ENCODE measurements at regions of chr20 and their contacts with region 1.

Region 1: DNA sequence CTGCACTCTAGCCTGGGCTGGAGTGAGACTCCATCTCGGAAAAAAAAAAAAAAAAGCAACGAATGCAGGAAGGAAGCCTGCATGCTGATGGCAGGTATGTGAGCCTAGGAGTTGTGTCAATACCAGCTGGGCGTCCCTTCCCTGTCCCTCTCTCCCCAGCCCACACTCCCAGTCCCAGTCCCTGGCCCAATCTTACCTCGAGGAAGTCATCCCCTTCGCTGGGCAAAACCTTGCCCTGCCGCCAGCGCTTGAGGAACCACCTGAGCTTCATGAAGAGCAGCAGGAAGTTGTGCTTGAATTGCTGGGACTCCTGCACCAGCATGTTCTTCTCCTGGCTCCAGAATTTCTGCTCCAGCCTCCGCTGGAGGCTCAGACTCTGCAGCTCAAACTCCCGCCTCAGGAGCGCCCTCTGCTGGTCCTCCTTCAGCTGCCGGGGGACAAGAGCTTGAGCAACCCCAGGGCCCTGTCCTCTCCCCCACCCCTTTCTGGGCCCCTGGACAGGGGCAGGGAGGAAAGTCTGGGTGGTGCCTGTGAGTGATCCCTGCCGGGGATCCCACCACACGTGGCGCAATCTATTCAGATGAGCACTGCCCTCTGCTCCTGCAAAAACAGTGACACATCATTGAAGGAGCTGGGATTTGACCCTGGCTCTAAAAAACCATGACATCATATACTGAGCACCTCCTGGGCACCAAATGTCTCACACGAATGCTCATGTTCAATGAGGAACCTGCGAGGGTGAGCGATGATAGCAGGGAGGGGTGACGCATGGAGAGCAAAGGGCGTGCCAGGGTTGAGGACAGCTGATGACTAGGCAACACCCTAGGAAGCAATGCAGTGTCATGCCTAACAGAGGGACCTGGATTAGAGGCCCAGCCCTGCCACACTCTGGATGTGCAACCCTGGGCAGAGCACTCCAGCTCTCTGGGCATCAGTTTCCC is 35.0 kb upstream of the DSN1 start:
- DNase-seq: peak; percentile 44
- H3K4me3 Mint-ChIP-seq: no peak overlapping the region
- H3K27ac Mint-ChIP-seq: no peak overlapping the region
- H3K4me1 Mint-ChIP-seq: no peaks in the 10 kb centered on the region
- H3K27me3 Mint-ChIP-seq: no peaks in the 10 kb centered on the region

Region 2: GRCh38 chr20:36861875-36862801 is 53.6 kb after region 1 on chr20:
- intact Hi-C with region 1: loop called (anchors 1 kb)
- DNase-seq: no peak
- H3K4me3 Mint-ChIP-seq: peak overlapping the region; percentile 63
- H3K27ac Mint-ChIP-seq: no peak overlapping the region
- H3K4me1 Mint-ChIP-seq: peaks cover 12% of the 10 kb centered on the region
- H3K27me3 Mint-ChIP-seq: peaks cover 52% of the 10 kb centered on the region

Measured in activated T-helper 1 cell treated with anti-CD3 and anti-CD28 coated beads, Interleukin-12 subunit alpha, Interleukin-12 subunit beta, Interleukin-2, Interleukin-4 antibody, amounts not matched to agents 30 ng/mL and 10 ng/mL and 1 ng/mL, durations not matched to agents 14 hours and 24 hours and 36 hours (primary cell).